ENCODE measurements at regions of chr6 and their contacts with region 1.

Region 1: GRCh38 chr6:72649032-72649984 is 27.4 kb downstream of the KCNQ5 start:
- DNase-seq: peak; percentile 31
- H3K4me3 Mint-ChIP-seq: no peak overlapping the region
- H3K27ac Mint-ChIP-seq: peak overlapping the region; percentile 47
- H3K4me1 Mint-ChIP-seq: peaks cover 34% of the 10 kb centered on the region
- H3K27me3 Mint-ChIP-seq: no peaks in the 10 kb centered on the region

Region 2: DNA sequence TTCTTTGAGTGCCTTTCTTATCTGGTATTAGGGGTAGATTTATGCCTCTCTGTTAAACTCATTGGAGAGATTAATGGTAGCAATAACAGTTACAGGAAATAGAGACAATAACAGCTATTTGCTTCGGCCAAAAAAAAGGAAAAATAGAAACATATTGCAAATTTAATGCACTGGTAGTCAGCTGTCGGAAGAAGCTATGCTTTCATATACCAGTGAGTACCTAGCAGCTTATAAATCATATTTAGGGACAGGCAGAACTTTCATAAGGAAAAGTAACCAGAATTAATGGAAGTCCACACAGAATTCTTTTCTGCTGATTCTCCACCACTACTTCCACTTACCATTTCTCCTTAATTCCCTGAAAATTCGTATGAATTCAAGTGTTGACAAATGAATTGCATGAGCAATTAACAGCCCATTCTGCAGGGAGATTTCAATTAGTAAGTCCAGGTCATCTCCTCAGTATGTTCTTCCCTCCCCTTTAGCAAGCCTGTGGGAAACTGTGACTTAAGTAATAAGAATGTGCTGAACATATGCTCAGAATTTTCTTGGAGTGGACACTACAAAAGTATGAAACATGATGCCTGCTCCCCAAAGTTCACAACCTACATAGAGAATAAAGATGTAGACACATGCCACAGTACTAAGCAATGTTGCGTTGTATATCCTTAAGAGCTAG is 224.2 kb before region 1 on chr6:
- CTCF ChIA-PET with region 1: no interaction called
- POLR2A ChIA-PET with region 1: no interaction called
- intact Hi-C with region 1: no loop called
- DNase-seq: no peak
- H3K4me3 Mint-ChIP-seq: no peak overlapping the region
- H3K27ac Mint-ChIP-seq: no peak overlapping the region
- H3K4me1 Mint-ChIP-seq: no peaks in the 10 kb centered on the region
- H3K27me3 Mint-ChIP-seq: peaks cover 9% of the 10 kb centered on the region

Region 3: GRCh38 chr6:72457738-72458137 is 191.6 kb before region 1 on chr6:
- CTCF ChIA-PET with region 1: no interaction called
- POLR2A ChIA-PET with region 1: no interaction called
- intact Hi-C with region 1: no loop called
- DNase-seq: no peak
- H3K4me3 Mint-ChIP-seq: no peak overlapping the region
- H3K27ac Mint-ChIP-seq: no peak overlapping the region
- H3K4me1 Mint-ChIP-seq: no peaks in the 10 kb centered on the region
- H3K27me3 Mint-ChIP-seq: peaks cover 5% of the 10 kb centered on the region

Region 4: GRCh38 chr6:72616406-72617015 is 32.8 kb before region 1 on chr6:
- CTCF ChIA-PET with region 1: interaction called, 17 read pairs
- POLR2A ChIA-PET with region 1: interaction called, 27 read pairs
- intact Hi-C with region 1: loop called (anchors 1 kb)
- DNase-seq: no peak
- H3K4me3 Mint-ChIP-seq: no peak overlapping the region
- H3K27ac Mint-ChIP-seq: no peak overlapping the region
- H3K4me1 Mint-ChIP-seq: peaks cover 43% of the 10 kb centered on the region
- H3K27me3 Mint-ChIP-seq: peaks cover 2% of the 10 kb centered on the region

Region 5: GRCh38 chr6:72636215-72636614 is 13.1 kb before region 1 on chr6:
- CTCF ChIA-PET with region 1: no interaction called
- POLR2A ChIA-PET with region 1: no interaction called
- intact Hi-C with region 1: no loop called
- DNase-seq: no peak
- H3K4me3 Mint-ChIP-seq: no peak overlapping the region
- H3K27ac Mint-ChIP-seq: no peak overlapping the region
- H3K4me1 Mint-ChIP-seq: no peaks in the 10 kb centered on the region
- H3K27me3 Mint-ChIP-seq: no peaks in the 10 kb centered on the region

Region 6: DNA sequence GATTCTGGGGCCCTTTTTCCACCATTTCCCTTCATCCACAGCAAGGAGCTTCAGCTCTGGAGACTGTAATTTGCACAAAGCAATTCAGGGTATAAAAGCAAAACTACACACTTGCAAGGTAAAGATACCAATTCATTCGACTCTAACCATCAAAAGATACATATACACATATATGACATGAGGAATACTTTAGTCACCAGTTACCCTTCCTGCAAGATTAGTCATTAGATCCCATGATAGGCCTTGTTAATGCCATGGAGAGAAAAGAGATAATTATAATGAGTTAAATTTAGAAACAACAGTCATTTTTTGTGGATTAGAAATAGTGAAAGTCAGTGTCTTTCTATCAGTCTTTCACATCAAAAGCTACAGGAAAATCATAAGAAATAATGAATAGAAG is 176.7 kb after region 1 on chr6:
- CTCF ChIA-PET with region 1: no interaction called
- POLR2A ChIA-PET with region 1: no interaction called
- intact Hi-C with region 1: loop called (anchors 1 kb)
- DNase-seq: no peak
- H3K4me3 Mint-ChIP-seq: no peak overlapping the region
- H3K27ac Mint-ChIP-seq: no peak overlapping the region
- H3K4me1 Mint-ChIP-seq: peaks cover 17% of the 10 kb centered on the region
- H3K27me3 Mint-ChIP-seq: no peaks in the 10 kb centered on the region

Region 7: DNA sequence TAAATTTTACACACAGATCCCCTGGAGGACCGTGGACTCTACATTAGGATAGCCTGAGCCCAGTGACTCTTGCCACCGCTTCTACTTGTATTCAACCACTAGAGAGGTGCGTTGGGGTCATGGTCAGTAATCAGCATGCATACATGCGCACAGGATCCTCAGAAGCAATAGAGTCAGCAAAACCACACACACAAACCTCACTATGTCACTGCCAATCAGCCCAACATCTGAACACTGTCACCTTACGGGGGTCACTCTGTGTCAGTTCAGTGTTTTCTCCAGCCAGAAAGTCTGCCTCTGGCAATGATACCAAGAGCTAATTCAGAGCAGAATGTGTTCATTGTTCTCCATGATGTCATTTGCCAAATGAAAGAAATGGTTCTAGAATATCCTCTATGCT is 350.7 kb after region 1 on chr6:
- CTCF ChIA-PET with region 1: no interaction called
- POLR2A ChIA-PET with region 1: no interaction called
- intact Hi-C with region 1: no loop called
- DNase-seq: no peak
- H3K4me3 Mint-ChIP-seq: no peak overlapping the region
- H3K27ac Mint-ChIP-seq: no peak overlapping the region
- H3K4me1 Mint-ChIP-seq: no peaks in the 10 kb centered on the region
- H3K27me3 Mint-ChIP-seq: no peaks in the 10 kb centered on the region